ENCODE measurements at regions of chr3 and their contacts with region 1.

Region 1: DNA sequence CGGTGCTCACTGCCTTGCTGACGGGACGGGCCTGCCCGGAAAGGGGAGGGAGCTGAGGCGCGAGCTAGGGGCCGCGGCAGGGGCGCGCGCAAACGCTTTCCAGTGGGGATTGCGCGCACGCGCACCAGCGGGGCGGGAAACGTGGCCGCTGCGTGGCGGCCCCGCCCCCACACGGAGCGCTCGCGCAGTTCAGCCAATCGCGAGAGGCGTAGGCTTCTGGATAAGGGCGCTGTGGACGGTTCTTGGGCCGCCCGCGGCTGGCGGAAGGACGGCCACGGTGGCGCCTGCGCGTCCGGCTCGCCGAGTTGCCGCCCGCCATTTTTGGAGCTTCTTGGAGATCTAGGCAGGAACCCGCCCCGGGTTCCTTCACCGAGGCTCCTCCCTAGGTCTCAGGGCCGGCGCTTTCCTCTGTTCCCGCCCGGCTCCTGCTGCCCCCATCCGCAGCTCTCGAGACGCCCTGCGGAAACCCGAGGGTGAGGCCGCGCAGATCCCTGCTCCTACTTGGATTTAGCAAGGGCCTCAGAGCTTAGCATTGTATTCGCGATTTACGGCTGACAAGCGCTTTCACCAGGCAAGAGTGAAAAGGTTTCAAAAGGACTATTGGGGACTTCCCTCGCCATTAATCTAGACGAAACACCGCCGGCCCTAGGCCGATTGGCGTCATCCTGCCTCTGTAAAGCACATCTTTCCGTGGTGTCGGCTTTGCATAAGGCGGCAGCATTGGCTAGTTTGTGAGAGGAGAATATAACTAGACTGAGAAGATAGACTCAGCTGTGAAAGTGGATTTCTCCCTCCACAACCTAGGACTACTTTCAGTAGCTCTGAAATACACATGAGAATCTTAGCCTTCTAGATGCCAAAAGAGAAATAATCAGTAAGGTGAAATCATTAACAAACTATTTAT is 496 bp upstream of the STAG1 start:
- DNase-seq: peak; percentile 97 to 99 (median 99)
- H3K4me3 ChIP-seq: peak overlapping the region; percentile 72 to 94
- H3K4me3 Mint-ChIP-seq: peak overlapping the region; percentile 87 to 97 (median 94)
- H3K27ac ChIP-seq: peak overlapping the region; percentile 80
- H3K27ac Mint-ChIP-seq: peak overlapping the region; percentile 95 to 99 (median 98)
- H3K4me1 ChIP-seq: peaks cover 44% of the 10 kb centered on the region
- H3K4me1 Mint-ChIP-seq: peaks cover 32 to 53% (median 39%) of the 10 kb centered on the region in 4 donors
- H3K27me3 ChIP-seq: no peaks in the 10 kb centered on the region
- H3K27me3 Mint-ChIP-seq: no peaks in the 10 kb centered on the region

Region 2: DNA sequence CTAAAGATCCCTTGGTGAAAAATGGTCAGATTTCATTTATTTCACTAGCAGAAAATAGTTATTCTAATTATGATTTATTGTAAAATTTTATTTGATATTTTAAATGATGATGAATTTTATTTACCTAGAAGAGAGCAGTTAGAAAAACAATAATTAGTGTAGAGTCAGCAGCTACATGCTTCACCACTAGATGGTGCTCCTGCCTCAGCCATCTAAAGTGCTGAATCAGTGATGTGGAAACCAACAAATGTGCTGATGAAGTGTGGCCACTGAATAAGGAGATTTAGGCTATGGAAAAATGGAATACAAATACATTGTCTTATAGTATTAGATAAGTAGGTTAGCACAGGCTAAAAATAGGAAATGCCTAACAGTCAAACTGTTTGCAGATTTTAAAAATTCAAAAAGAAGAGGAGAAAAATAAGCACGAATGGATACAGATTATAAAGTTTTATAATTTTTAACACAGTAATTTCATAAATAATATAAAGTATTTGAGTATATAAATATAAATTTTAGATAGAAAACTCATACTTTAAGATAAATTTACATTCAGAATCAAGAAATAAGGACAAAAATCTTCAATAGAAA is 677.4 kb before region 1 on chr3:
- CTCF ChIA-PET with region 1: interaction called, 72 read pairs
- POLR2A ChIA-PET with region 1: interaction called, 5 read pairs
- intact Hi-C with region 1: loop called (anchors 1 kb)
- DNase-seq: peak; percentile 56 to 70 (median 64)
- H3K4me3 ChIP-seq: no peak overlapping the region
- H3K4me3 Mint-ChIP-seq: no peak overlapping the region
- H3K27ac ChIP-seq: no peak overlapping the region
- H3K27ac Mint-ChIP-seq: no peak overlapping the region
- H3K4me1 ChIP-seq: no peaks in the 10 kb centered on the region
- H3K4me1 Mint-ChIP-seq: peaks cover 0 to 4% (median 1%) of the 10 kb centered on the region in 4 donors
- H3K27me3 ChIP-seq: no peaks in the 10 kb centered on the region
- H3K27me3 Mint-ChIP-seq: no peaks in the 10 kb centered on the region

Region 3: DNA sequence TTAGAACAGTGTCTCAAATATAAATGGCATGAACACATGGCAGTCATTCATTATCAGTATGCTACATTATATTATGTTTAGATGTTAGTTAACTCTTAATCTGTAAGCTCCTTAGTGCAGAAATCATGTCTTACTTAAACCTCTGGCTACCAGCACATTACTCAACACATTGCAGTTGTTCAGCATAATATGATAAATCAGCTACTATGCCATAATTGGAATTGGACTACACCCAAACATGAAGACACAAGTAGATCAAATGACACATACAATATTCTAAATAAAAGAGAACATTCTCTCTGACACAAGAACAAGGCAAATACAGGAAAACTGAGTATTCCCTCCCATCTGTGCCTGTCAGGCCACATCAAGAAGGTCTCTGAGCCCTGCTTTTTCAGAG is 386.4 kb before region 1 on chr3:
- CTCF ChIA-PET with region 1: interaction called, 10 read pairs
- POLR2A ChIA-PET with region 1: no interaction called
- intact Hi-C with region 1: no loop called
- DNase-seq: no peak
- H3K4me3 ChIP-seq: no peak overlapping the region
- H3K4me3 Mint-ChIP-seq: no peak overlapping the region
- H3K27ac ChIP-seq: no peak overlapping the region
- H3K27ac Mint-ChIP-seq: peak overlapping the region in 5 of 7 donors; percentile 1 to 79 (median 20)
- H3K4me1 ChIP-seq: no peaks in the 10 kb centered on the region
- H3K4me1 Mint-ChIP-seq: peaks cover 0 to 2% (median 0%) of the 10 kb centered on the region in 4 donors
- H3K27me3 ChIP-seq: no peaks in the 10 kb centered on the region
- H3K27me3 Mint-ChIP-seq: no peaks in the 10 kb centered on the region

Region 4: GRCh38 chr3:136576279-136577009 is 176.2 kb before region 1 on chr3:
- CTCF ChIA-PET with region 1: interaction called, 10 read pairs
- POLR2A ChIA-PET with region 1: interaction called, 5 read pairs
- intact Hi-C with region 1: no loop called
- DNase-seq: no peak
- H3K4me3 ChIP-seq: no peak overlapping the region
- H3K4me3 Mint-ChIP-seq: no peak overlapping the region
- H3K27ac ChIP-seq: no peak overlapping the region
- H3K27ac Mint-ChIP-seq: no peak overlapping the region
- H3K4me1 ChIP-seq: no peaks in the 10 kb centered on the region
- H3K4me1 Mint-ChIP-seq: peaks cover 2 to 5% (median 4%) of the 10 kb centered on the region in 4 donors
- H3K27me3 ChIP-seq: no peaks in the 10 kb centered on the region
- H3K27me3 Mint-ChIP-seq: no peaks in the 10 kb centered on the region

Region 5: DNA sequence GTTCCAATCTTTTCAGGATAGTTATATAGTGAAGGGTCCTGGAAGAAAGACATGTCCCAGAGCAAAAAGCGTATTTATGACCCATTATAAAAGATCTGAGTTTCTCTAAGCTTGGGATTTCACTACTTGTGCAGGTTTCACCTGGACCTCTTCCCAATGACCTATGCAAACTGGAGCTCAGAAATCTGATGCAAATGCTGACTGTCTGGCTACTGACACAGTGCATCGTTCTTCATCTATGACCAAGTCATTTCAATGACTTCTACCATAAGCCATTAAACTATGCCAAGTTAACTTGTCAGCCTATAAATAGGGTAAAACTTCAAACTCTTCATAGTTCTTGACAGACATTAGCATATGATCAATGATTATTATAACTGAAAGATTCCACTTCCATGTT is 11.6 kb before region 1 on chr3:
- CTCF ChIA-PET with region 1: interaction called, 26 read pairs
- POLR2A ChIA-PET with region 1: interaction called, 3 read pairs
- intact Hi-C with region 1: no loop called
- DNase-seq: no peak
- H3K4me3 ChIP-seq: no peak overlapping the region
- H3K4me3 Mint-ChIP-seq: no peak overlapping the region
- H3K27ac ChIP-seq: no peak overlapping the region
- H3K27ac Mint-ChIP-seq: no peak overlapping the region
- H3K4me1 ChIP-seq: peaks cover 9% of the 10 kb centered on the region
- H3K4me1 Mint-ChIP-seq: peaks cover 30 to 47% (median 39%) of the 10 kb centered on the region in 4 donors
- H3K27me3 ChIP-seq: no peaks in the 10 kb centered on the region
- H3K27me3 Mint-ChIP-seq: no peaks in the 10 kb centered on the region

Region 6: GRCh38 chr3:136882572-136882971 is 129.9 kb after region 1 on chr3:
- CTCF ChIA-PET with region 1: interaction called, 12 read pairs
- POLR2A ChIA-PET with region 1: interaction called, 7 read pairs
- intact Hi-C with region 1: no loop called
- DNase-seq: peak in 2 of 5 donors; percentile 28
- H3K4me3 ChIP-seq: no peak overlapping the region
- H3K4me3 Mint-ChIP-seq: peak overlapping the region in 3 of 8 donors; percentile 11 to 61 (median 37)
- H3K27ac ChIP-seq: no peak overlapping the region
- H3K27ac Mint-ChIP-seq: peak overlapping the region; percentile 5 to 91 (median 72)
- H3K4me1 ChIP-seq: peaks cover 73% of the 10 kb centered on the region
- H3K4me1 Mint-ChIP-seq: peaks cover 58 to 89% (median 72%) of the 10 kb centered on the region in 4 donors
- H3K27me3 ChIP-seq: no peaks in the 10 kb centered on the region
- H3K27me3 Mint-ChIP-seq: no peaks in the 10 kb centered on the region

Region 7: DNA sequence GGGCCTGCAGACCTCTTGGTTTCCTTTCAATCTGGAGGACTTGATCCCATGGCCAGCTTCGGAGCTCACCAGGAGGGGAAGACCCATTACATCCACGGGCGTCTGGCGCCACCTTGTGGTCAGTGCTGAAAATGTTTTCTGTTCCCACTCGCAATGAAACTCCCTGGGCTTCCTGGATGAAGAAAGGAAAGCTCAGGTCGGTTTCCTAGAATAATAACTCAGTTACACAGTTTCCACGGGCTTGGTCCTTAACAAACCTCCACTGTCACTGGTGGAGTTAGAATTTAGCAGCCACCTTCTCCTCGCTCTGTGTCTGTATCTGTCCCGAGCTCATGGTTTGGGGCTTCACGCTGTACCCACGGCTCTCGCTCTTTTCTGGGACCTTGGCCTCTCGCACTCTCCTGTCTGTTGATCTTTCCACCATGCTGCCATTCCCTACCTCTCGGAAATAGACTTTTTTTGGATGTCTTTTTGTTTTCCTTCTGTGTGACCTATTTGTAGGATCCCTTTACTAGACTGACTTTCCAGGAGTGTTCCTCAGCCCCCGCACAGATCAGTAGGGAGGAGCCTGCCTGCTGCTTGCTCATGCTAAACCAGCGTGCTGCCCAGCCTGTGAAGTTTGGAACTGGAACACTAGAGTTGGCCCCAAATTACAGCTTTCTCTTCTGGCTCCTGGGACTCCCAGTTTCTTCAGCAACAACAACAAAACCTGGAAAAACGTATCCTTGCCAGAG is 261.4 kb after region 1 on chr3:
- CTCF ChIA-PET with region 1: interaction called, 206 read pairs
- POLR2A ChIA-PET with region 1: interaction called, 46 read pairs
- intact Hi-C with region 1: loop called (anchors 1 kb)
- DNase-seq: peak; percentile 73 to 81 (median 75)
- H3K4me3 ChIP-seq: peak overlapping the region in 1 of 2 donors; percentile 3
- H3K4me3 Mint-ChIP-seq: peak overlapping the region; percentile 65 to 89 (median 78)
- H3K27ac ChIP-seq: no peak overlapping the region
- H3K27ac Mint-ChIP-seq: peak overlapping the region in 4 of 7 donors; percentile 23 to 77 (median 38)
- H3K4me1 ChIP-seq: no peaks in the 10 kb centered on the region
- H3K4me1 Mint-ChIP-seq: peaks cover 5 to 12% (median 7%) of the 10 kb centered on the region in 4 donors
- H3K27me3 ChIP-seq: no peaks in the 10 kb centered on the region
- H3K27me3 Mint-ChIP-seq: no peaks in the 10 kb centered on the region

Measured in CD4-positive, alpha-beta memory T cell (primary cell).